Endothelial cell of umbilical vein (primary cell): ENCODE measurements at regions of chr3 and their contacts with region 1.

Region 1: GRCh38 chr3:112642912-112643506 is 2.1 kb upstream of the CCDC80 start:
- DNase-seq: peak; percentile 83
- H3K4me3 ChIP-seq: peak overlapping the region in 1 of 3 experiments; percentile 12
- H3K27ac ChIP-seq: no peak overlapping the region
- H3K4me1 ChIP-seq: peaks cover 28% of the 10 kb centered on the region
- H3K27me3 ChIP-seq: no peaks in the 10 kb centered on the region
- CTCF ChIP-seq: peak; percentile 82 to 86
- POLR2A ChIP-seq: no peak

Region 2: DNA sequence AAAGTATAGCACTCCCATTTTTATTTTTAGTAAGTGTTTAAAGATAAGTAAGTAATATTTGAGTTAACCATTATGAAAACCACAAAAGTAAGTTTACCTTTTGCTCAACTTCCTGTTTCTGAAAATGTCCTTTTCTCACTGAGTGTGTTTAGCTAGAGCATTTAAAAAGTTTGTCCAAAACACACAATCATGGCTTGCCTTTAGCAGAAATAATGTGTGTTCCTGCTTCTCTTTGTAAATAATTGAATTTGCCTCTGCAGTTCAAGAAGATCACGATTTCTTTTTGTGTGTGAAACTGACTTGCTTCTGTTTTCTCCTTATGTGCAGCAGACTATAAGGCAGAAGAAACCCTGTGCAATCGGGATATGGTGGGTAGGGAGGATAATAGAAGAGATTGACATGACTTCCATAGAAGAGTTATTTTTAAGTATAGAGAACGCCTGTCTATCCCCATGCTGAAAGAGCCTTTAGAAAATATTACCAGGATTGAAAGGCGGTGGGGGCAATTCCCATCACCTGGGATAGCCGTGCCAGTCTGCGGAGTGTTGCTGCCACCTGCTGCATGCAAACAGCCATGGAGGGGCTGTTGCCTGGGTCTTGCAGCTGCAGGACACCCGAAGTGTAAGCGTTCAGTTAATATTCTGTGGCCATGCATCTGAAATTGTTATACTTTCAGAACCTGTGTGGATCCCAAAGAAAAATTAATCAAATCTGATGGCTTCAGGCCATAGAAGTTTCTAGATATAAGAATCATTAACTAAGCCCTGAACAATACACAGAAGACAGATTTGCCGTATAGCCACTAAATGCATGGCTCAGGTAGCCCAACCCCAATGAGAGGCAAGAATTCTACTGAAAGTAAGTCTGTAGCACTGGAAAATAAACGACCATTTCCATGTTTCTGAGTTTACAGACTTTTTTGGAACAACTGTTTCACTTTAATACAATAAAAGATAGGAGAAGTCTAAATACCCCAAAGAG is 1103.4 kb before region 1 on chr3:
- CTCF ChIA-PET with region 1: no interaction called
- POLR2A ChIA-PET with region 1: no interaction called
- dilution Hi-C with region 1: no loop called
- intact Hi-C with region 1: no loop called
- DNase-seq: no peak
- H3K4me3 ChIP-seq: no peak overlapping the region
- H3K27ac ChIP-seq: no peak overlapping the region
- H3K4me1 ChIP-seq: no peaks in the 10 kb centered on the region
- H3K27me3 ChIP-seq: no peaks in the 10 kb centered on the region
- CTCF ChIP-seq: peak in 1 of 2 donors; percentile 31
- POLR2A ChIP-seq: no peak

Region 3: GRCh38 chr3:112582244-112582874 is 60.6 kb before region 1 on chr3:
- CTCF ChIA-PET with region 1: interaction called, 100 read pairs
- POLR2A ChIA-PET with region 1: interaction called, 22 read pairs
- dilution Hi-C with region 1: no loop called
- intact Hi-C with region 1: loop called (anchors 1 kb)
- DNase-seq: peak; percentile 77
- H3K4me3 ChIP-seq: no peak overlapping the region
- H3K27ac ChIP-seq: no peak overlapping the region
- H3K4me1 ChIP-seq: no peaks in the 10 kb centered on the region
- H3K27me3 ChIP-seq: no peaks in the 10 kb centered on the region
- CTCF ChIP-seq: peak; percentile 40 to 46
- POLR2A ChIP-seq: no peak

Region 4: DNA sequence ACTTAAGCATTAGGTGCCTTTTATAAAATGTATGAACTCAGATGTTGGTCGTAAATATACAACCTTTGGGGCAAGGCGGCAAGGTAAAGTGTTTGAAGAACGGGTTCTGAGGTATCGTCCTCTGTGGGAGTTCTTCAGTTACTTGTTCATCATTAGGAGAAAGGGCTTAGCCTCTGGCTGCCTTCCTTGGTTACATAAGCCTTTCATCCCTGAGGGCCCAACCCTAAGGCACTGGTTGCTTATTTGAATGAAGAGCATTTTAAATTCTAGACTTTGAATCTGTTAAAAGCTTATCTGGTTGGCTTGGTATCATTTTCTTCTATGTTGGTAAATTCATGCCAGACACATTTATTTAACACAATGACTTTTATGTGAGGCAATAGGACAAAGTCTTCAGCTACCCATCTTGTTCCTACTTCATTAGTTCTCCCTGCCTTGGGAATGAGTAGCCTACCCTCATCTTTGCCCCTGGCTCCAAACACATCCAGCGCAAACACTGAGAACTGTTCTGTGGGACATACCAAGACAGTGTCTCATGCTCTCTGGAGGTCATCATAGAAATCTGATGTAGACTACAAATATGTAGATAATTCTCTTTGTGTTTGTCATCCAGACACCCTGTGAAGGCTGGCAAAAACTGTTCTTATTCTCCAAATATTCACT is 10.3 kb after region 1 on chr3:
- CTCF ChIA-PET with region 1: interaction called, 14 read pairs
- POLR2A ChIA-PET with region 1: interaction called, 7 read pairs
- dilution Hi-C with region 1: no loop called
- intact Hi-C with region 1: no loop called
- DNase-seq: no peak
- H3K4me3 ChIP-seq: no peak overlapping the region
- H3K27ac ChIP-seq: no peak overlapping the region
- H3K4me1 ChIP-seq: no peaks in the 10 kb centered on the region
- H3K27me3 ChIP-seq: no peaks in the 10 kb centered on the region
- CTCF ChIP-seq: no peak
- POLR2A ChIP-seq: no peak

Region 5: DNA sequence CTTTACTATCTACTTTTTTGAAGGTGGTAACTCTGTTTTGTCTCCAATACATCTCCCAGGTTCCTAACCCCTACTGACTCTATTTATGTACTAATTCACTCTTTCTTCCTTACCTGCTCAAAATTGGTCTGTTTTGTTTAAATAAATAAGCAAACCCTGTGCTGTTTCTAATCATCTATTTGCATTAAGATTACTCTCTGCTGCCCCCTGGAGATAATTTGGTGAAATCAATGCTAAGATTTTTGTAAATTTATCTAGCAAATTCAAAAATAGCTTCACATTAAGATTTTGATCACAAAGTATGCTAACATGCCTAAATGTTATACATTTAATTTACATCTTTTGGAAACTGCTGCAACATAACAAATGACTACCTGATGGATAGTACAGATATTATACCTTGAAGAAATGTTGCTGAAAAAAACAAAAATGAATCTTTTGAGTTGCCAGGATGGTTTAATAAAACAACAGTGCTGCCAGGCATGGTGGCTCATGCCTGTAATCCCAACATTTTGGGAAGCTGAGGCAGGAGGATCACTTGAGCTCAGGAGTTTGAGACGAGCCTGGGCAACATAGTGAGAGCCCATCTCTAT is 336.3 kb after region 1 on chr3:
- CTCF ChIA-PET with region 1: interaction called, 95 read pairs
- POLR2A ChIA-PET with region 1: no interaction called
- dilution Hi-C with region 1: no loop called
- intact Hi-C with region 1: loop called (anchors 1 kb)
- DNase-seq: peak; percentile 48
- H3K4me3 ChIP-seq: no peak overlapping the region
- H3K27ac ChIP-seq: no peak overlapping the region
- H3K4me1 ChIP-seq: no peaks in the 10 kb centered on the region
- H3K27me3 ChIP-seq: peaks cover 3 to 13% of the 10 kb centered on the region in 2 experiments
- CTCF ChIP-seq: peak; percentile 34 to 36
- POLR2A ChIP-seq: no peak

Region 6: GRCh38 chr3:113051302-113051711 is 408.3 kb after region 1 on chr3:
- CTCF ChIA-PET with region 1: interaction called, 4 read pairs
- POLR2A ChIA-PET with region 1: no interaction called
- dilution Hi-C with region 1: no loop called
- intact Hi-C with region 1: loop called (anchors 2 kb)
- DNase-seq: peak; percentile 82
- H3K4me3 ChIP-seq: no peak overlapping the region
- H3K27ac ChIP-seq: no peak overlapping the region
- H3K4me1 ChIP-seq: peaks cover 3% of the 10 kb centered on the region
- H3K27me3 ChIP-seq: peaks cover 0 to 11% of the 10 kb centered on the region in 2 experiments
- CTCF ChIP-seq: peak; percentile 75 to 79
- POLR2A ChIP-seq: no peak